ENCODE measurements at regions of chr1 and their contacts with region 1.

Region 1: GRCh38 chr1:41122851-41123507 is 101.5 kb upstream of the SLFNL1 start:
- DNase-seq: no peak
- H3K4me3 ChIP-seq: no peak overlapping the region
- H3K27me3 ChIP-seq: no peaks in the 10 kb centered on the region
- CTCF ChIP-seq: peak; percentile 65

Region 2: DNA sequence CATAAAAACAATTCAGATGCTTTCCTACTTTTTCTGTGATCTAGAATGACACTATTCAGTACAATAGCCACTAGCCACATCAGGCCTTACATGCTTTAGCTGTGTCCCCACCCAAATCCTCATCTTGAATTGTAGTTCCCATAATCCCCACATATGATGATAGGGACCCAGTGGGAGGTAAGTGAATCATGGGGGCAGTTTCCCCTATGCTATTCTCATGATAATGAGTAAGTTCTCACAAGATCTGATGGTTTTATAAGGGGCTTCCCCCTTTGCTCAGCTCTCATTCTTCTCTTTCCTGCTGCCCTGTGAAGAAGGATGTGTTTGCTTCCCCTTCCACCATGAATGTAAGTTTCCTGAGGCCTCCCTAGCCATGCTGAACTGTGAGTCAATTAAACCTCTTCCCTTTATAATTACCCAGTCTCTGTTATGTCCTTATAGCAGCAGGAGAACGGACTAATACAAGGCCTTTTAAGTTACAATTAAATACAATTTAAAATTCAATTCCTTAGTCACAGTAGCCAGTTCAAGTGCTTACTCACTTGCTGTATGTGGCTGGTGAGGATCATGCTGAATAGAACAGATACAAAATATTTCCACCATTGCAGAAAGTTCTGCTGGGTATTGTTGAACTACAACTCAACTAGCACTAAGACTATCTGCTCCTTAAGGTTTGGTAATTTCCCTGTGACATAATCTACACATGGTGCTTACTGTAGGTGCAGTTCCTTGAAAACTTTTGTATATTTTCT is 12.4 kb after region 1 on chr1:
- CTCF ChIA-PET with region 1: interaction called, 10 read pairs
- POLR2A ChIA-PET with region 1: no interaction called
- DNase-seq: no peak
- H3K4me3 ChIP-seq: no peak overlapping the region
- H3K27me3 ChIP-seq: no peaks in the 10 kb centered on the region
- CTCF ChIP-seq: no peak

Measured in BJ (cell line).